MCF 10A (cell line): ENCODE measurements at regions of chr2 and their contacts with region 1.

Region 1: DNA sequence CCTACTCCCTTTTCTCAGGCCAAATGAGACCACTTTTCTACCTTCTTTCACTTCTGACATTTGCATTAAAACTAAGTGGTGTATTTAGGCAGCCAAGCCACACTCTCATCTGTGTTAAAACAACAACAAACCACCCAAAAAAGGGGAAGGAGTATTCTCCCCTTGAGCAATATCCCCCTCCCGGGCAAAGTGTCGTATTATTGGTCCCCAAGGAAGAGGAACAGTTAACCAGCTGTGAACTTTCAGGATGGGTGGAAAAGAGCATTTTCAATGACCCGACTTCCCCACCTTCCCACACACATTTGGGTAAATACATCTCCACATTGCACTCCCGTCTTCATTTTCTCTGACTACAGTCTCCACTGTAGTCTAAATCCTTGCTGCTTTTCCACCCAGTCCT is 44.3 kb downstream of the FEZ2 start:
- DNase-seq: no peak
- H3K4me3 Mint-ChIP-seq: no peak overlapping the region
- H3K27ac Mint-ChIP-seq: no peak overlapping the region
- H3K4me1 Mint-ChIP-seq: no peaks in the 10 kb centered on the region
- H3K27me3 Mint-ChIP-seq: no peaks in the 10 kb centered on the region
- CTCF ChIP-seq: no peak

Region 2: GRCh38 chr2:36568516-36569246 is 15.0 kb after region 1 on chr2:
- CTCF ChIA-PET with region 1: interaction called, 8 read pairs
- POLR2A ChIA-PET with region 1: interaction called, 11 read pairs
- intact Hi-C with region 1: no loop called
- DNase-seq: peak; percentile 52
- H3K4me3 Mint-ChIP-seq: peak overlapping the region; percentile 57
- H3K27ac Mint-ChIP-seq: peak overlapping the region; percentile 96
- H3K4me1 Mint-ChIP-seq: peaks cover 31% of the 10 kb centered on the region
- H3K27me3 Mint-ChIP-seq: no peaks in the 10 kb centered on the region
- CTCF ChIP-seq: no peak